Calu3 (cell line): ENCODE measurements at regions of chr16 and their contacts with region 1.

Region 1: DNA sequence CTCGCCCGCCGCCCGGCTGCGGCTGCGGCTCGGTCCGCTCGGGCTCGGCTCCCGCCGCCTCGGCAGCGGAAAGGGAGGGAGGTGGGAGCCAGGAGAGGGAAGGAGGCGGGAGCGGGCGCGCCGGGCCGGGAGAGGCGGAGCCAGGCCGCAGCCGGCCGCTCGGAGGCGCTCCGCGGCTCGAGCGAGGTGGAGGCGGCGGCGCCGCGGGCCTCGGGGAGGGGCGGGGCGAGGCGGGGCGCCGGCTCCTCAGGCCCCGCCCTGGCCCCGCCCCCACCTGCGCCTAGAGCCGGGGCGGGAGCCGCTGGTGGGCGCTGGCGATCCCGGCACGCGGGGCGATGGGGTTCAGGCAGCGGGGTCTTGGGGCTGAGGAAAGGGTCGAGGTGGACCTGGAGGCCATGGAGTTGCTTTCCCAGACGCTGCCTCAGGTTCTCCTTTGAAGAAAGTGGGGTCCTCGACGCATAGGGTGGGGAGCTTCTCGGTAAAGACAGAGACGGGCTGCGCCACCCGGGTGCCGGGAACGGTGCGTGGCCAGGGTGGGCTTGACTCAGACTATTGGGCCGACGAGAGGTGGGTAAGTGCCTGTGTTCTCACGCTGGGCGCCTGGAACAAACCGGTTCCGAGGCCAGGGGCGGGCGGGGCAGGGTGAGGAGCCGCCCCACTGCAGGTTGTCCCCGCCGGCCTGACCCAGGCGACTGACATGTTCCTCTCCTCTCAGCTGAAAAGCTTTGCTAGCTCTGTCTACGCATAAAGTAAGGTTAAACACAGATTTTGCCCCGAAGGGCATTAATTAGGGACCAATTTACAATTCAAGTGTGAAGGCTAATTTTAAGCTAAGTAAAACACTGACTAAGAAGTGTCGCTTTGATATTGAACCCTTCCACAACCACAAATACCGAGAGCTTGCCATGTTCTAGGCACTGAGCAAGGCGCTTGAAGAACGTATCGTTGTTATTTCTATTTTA is at the start of gene CMTM4:
- DNase-seq: peak; percentile 95
- H3K4me3 Mint-ChIP-seq: peak within 1 kb of the TSS; percentile 89
- H3K27ac Mint-ChIP-seq: peak within 1 kb of the TSS; percentile 56
- H3K4me1 Mint-ChIP-seq: peaks cover 26% of the 10 kb centered on the region
- H3K27me3 Mint-ChIP-seq: no peaks in the 10 kb centered on the region
- CTCF ChIP-seq: no peak
- total RNA-seq, gene CMTM4: 79.6 and 110 TPM in 2 replicates

Region 2: DNA sequence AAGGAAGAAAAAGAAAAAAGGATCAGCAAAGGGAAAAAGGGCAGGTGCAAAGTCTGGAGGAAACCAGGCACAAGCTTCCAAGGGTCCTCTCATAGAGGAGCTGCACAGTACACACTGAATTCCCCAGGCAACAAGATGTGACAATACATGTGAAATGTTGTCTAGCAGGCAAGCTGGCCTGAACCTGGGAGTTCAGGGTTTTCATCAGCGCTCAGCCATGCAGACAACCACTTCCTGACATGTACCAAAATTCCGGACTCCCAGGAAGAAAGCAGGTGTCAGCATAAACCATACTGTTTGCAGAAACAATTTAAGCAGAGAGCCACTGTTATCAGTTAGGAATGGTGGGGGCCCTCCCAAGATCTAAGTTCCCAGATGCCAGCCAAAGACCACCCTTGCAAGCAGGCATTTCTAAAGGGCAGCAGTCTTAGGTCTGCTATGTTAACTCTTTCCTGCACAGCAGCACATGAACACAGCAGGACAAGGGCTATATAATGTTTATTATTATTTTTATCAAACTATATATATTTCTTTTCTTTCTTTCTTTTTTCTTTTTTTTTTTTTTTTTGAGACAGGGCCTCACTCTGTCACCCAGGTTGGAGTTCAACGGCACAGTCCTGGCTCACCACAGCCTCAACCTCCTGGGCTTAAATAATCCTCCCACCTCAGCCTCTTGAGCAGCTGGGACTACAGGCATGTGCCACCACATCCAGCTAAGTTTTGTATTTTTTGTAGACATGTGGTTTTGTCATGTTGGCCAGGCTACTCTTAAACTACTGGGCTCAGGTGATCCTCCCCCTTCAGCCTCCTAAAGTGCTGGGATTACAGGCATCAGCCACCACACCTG is 157.1 kb before region 1 on chr16:
- CTCF ChIA-PET with region 1: no interaction called
- intact Hi-C with region 1: no loop called
- DNase-seq: no peak
- H3K4me3 Mint-ChIP-seq: no peak overlapping the region
- H3K27ac Mint-ChIP-seq: no peak overlapping the region
- H3K4me1 Mint-ChIP-seq: peaks cover 8% of the 10 kb centered on the region
- H3K27me3 Mint-ChIP-seq: no peaks in the 10 kb centered on the region
- CTCF ChIP-seq: no peak

Region 3: DNA sequence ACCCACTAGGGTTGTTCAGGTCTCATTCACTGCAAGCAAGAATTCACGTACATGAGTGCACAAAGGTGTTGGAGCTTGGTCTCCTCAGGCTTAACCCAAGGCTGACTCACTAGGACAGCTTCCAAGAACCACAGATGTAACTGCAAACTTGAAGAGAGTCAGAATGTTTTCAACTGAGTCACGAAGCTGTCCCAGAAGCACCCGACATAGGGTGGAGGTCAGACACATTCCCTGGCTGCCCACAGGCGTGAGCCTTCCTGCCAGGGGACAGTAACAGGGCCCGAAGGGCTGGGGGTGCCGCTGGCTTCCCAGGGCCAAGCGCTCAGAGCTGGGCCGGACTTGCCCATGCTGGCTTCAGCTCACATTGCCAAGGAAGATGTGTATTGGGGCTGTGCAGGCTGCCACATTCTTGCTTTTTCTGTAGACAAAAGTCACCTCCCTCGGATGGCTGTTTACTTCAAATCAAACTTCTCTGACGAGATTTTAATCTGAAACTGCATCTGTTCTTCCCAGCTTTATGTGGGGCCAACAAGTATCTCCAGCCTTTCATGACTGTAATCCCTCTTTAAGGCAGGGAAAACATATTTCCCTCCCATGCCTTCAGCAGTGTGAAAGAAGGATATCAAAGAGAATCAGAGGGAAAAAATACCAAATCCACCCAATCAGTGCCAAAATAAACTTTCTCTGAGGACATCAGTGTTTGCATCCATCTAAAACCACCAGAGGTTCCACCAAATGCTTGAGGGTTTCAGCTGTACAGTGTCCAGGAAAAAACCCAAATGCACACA is 78.2 kb before region 1 on chr16:
- CTCF ChIA-PET with region 1: no interaction called
- intact Hi-C with region 1: loop called (anchors 10 kb)
- DNase-seq: no peak
- H3K4me3 Mint-ChIP-seq: no peak overlapping the region
- H3K27ac Mint-ChIP-seq: no peak overlapping the region
- H3K4me1 Mint-ChIP-seq: no peaks in the 10 kb centered on the region
- H3K27me3 Mint-ChIP-seq: no peaks in the 10 kb centered on the region
- CTCF ChIP-seq: no peak

Region 4: DNA sequence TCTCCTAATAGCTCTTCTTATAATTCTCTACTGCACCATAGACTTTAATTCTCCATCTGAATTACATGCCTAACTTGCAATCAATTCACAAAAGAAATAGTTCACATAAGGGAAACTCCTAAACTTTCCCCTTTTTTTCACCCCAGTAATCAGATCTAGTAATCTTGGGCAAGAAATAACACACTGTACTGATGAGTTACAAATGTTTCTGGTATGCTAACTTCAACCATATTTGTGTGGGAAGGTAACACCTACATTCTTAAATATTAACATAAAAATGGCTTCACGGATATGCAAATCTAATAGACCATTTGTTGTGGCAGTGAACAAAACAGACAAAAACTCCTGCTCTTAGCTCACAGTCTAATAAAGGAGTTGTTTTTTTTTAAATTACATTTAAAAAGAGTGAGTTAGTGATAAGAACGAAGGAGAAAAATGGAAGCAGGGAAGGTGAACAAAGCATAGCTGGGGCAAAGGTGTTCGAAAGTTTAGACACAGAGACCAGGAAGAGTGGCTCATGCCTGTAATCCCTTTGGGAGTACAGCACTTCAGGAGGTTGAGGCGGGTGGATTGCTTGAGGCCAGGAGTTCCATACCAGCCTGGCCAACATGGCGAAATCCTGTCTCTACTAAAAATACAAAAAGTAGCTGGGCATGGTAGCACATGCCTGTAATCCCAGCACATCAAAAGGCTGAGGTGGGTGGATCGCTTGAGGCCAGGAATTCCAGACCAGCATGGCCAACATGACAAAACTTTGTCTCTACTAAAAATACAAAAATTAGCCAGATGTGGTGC is 57.7 kb before region 1 on chr16:
- CTCF ChIA-PET with region 1: no interaction called
- intact Hi-C with region 1: no loop called
- DNase-seq: no peak
- H3K4me3 Mint-ChIP-seq: no peak overlapping the region
- H3K27ac Mint-ChIP-seq: peak overlapping the region; percentile 57
- H3K4me1 Mint-ChIP-seq: peaks cover 19% of the 10 kb centered on the region
- H3K27me3 Mint-ChIP-seq: no peaks in the 10 kb centered on the region
- CTCF ChIP-seq: no peak

Region 5: DNA sequence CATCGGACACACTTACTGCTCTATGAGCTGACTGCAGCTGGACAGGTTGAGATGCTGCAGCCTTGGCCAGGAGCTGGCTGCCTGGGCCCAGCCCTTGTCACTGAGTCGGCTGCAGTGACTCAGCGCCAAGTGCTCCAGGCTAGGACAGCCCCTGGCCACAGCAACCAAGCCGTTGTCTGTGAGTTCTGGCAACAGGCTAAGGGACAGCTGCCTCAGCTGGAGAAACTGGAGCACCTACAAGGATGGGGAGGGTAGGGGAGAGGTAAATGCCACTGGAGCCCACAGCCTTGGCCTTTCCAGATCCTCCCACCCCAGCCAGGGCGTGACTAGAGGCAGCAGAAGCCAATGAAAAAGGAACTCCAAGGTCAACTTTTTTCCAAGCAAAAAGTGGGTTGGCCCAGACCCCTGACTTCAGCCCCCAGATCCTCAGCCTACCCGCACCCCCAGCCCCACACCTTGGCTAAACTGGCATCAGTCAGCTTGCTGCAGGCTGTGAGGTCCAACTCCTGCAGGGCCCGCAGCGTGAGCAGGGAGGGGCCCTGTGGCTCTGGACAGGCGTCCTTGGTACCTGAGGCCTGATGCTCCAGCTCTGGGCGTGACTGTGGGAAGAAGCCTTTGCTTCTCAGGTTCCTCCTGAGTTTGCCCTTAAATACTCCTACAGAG is 511.0 kb after region 1 on chr16:
- CTCF ChIA-PET with region 1: no interaction called
- intact Hi-C with region 1: no loop called
- DNase-seq: no peak
- H3K4me3 Mint-ChIP-seq: no peak overlapping the region
- H3K27ac Mint-ChIP-seq: no peak overlapping the region
- H3K4me1 Mint-ChIP-seq: no peaks in the 10 kb centered on the region
- H3K27me3 Mint-ChIP-seq: peaks cover 13% of the 10 kb centered on the region
- CTCF ChIP-seq: no peak